Breast epithelium (tissue), 4 donors: ENCODE measurements at regions of chr14 and their contacts with region 1.

Region 1: DNA sequence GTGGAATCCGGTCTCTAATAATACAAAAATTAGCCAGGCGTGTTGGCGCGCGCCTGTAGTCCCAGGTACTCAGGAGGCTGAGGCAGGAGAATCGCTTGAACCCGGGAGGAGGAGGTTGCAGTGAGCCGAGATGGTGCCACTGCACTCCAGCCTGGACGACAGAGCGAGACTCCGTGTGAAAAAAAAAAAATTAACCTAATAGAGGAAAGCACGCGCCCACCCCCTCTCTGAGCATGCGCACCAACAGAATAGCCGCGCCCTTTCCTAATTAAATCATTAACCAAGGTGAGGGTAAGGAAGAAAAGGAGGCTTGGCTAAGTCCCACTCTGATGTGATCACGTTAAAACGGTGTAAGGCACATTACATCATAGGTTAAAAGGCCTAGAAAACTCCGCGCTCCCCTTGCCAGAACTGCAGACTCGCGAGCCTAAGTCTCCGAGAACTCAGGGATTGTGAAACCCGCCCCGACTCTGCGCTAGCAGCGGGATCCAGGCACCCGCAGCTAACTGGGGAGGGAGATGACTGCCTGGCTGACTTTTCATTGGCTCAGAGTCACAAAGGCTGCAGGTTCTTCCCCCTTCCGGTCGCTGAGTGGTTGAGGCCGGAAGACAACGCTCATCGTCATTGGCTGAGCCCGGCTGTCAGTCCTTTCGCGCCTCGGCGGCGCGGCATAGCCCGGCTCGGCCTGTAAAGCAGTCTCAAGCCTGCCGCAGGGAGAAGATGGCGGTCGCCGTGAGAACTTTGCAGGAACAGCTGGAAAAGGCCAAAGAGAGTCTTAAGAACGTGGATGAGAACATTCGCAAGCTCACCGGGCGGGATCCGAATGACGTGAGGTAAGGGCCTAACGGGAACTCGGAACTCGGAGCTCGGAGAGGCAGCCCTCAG is at the start of gene PNN:
- DNase-seq: peak; percentile 96 to 98
- H3K4me3 ChIP-seq: peak within 1 kb of the TSS; percentile 83 to 92 (median 88)
- H3K27ac ChIP-seq: peak within 1 kb of the TSS; percentile 95 to 98
- H3K4me1 ChIP-seq: peaks cover 0 to 8% of the 10 kb centered on the region in 2 donors
- H3K27me3 ChIP-seq: no peaks in the 10 kb centered on the region
- CTCF ChIP-seq: peak in 2 of 3 donors; percentile 22 to 23
- POLR2A ChIP-seq: peak; percentile 73
- total RNA-seq, gene PNN: 31.8 to 50.8 (median 47.4) TPM

Region 2: DNA sequence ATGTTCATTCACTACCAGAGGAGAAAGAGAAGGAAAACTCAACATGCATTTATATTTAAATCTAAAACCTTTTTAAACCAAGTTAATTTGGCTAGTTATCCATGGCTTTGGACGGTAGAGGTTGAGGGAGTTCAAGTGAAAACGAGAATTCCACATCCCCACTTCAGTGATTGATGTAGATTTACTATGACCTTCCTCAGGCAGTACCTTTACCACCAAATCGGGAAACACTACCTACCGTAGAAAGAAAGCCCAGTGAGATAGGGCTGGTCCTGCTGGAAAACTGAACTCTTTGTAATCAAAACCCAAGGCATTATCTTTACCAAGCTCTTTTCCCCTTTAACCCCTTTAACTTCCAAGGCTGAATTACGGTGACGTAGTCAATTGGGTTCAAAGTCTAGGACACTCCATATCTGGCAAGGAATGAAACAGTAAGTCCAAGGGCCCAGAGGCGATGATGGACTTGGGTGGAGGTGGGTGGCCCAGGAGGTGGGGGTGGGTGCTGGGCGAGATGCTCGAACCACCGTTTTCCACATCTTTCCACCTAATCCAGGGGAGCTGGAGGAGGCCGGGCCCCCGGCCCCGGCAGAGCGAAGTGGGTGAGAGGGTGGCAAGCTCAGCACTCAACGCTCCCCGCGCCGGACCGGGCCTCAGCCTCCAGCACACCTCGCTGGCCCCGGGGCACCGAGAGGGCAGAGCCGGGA is 72.4 kb before region 1 on chr14:
- intact Hi-C with region 1: no loop called
- DNase-seq: no peak
- H3K4me3 ChIP-seq: peak overlapping the region; percentile 82 to 94 (median 92)
- H3K27ac ChIP-seq: peak overlapping the region; percentile 95 to 99
- H3K4me1 ChIP-seq: no peaks in the 10 kb centered on the region
- H3K27me3 ChIP-seq: no peaks in the 10 kb centered on the region
- CTCF ChIP-seq: no peak
- POLR2A ChIP-seq: no peak

Region 3: DNA sequence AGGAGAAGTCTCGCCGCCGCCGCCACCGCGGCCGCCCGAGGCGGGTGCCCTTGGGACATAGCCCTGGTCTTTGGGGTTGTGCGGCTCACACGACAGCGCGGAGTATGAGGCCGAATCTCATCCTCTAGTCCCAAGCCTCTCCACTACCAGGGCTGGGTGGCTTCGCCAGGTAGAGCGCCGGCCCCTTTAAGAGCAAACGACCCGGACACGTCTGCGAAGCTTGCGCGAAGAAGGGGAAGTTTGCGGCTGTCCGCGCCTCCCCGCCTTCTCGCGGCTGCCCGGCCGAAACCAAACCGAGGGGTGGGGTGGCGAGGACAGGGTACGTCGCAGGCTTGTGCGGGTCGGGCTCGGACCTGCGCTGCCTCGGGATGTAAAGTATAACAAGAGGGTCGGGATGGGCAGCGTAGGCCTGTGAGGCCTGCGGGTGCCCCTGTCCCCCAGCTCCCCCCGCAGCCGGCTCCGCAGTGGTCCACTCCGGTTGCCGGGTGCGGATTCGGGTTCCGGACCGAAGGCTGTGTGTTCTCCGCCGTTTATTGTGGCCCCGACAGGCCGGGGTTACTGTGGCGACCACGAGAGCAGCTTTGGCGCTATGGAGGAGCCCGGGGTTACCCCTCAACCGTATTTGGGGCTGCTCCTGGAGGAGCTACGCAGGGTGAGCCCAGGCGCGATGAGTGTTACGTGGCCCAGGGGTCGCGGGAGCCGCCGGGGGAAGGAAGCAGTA is 92.2 kb after region 1 on chr14:
- intact Hi-C with region 1: loop called (anchors 5 kb)
- DNase-seq: peak; percentile 65 to 71
- H3K4me3 ChIP-seq: peak overlapping the region; percentile 76 to 96 (median 89)
- H3K27ac ChIP-seq: peak overlapping the region; percentile 98 to 100
- H3K4me1 ChIP-seq: no peaks in the 10 kb centered on the region
- H3K27me3 ChIP-seq: no peaks in the 10 kb centered on the region
- CTCF ChIP-seq: peak in 1 of 3 donors; percentile 9
- POLR2A ChIP-seq: peak; percentile 29

Region 4: GRCh38 chr14:39680776-39681175 is 506.0 kb after region 1 on chr14:
- intact Hi-C with region 1: no loop called
- DNase-seq: no peak
- H3K4me3 ChIP-seq: no peak overlapping the region
- H3K27ac ChIP-seq: no peak overlapping the region
- H3K4me1 ChIP-seq: no peaks in the 10 kb centered on the region
- H3K27me3 ChIP-seq: no peaks in the 10 kb centered on the region
- CTCF ChIP-seq: no peak
- POLR2A ChIP-seq: no peak